AG04450 (cell line): ENCODE measurements at regions of chr18 and their contacts with region 1.

Region 1: GRCh38 chr18:62584241-62585120 is 61.7 kb downstream of the ZCCHC2 start:
- DNase-seq: peak; percentile 78
- H3K4me3 ChIP-seq: no peak overlapping the region
- H3K27ac ChIP-seq: no peak overlapping the region
- H3K27me3 ChIP-seq: peaks cover 2% of the 10 kb centered on the region
- CTCF ChIP-seq: peak; percentile 99

Region 2: DNA sequence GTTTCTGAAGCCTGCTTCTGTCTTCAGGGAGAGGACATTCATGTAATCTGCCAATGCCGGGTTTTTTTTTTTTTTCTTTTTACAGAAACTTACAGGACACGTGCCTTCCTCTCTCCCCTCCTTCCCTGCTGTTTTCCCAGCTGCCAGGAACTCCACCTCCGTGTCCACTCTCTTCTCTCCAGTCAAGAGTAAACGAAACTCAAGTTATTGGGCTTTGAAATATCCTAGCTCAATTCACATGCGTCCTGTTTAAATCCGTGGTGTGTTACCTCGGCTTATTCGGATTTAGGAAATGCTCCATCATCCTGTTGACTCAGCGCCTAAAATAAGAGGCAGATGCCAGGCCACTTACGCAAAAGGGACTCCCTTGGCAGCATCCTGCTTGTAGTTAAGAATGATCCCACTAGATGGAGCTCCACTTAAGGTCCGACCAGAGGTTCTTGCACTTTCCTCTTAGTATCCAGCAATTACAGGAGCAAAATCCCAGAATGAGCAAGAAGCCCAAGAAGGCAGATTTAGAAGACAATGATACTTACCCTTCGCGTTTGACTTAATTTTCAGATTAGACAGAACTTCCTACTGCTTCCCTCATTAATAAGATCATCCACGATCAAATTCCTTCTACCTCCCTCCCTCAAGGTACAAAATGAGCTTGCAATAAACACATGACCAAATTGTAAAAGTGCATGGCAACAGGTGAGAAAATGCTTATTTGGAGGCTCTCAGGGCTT is 158.9 kb before region 1 on chr18:
- CTCF ChIA-PET with region 1: interaction called, 108 read pairs
- POLR2A ChIA-PET with region 1: no interaction called
- DNase-seq: peak; percentile 92
- H3K4me3 ChIP-seq: peak overlapping the region; percentile 55
- H3K27ac ChIP-seq: peak overlapping the region; percentile 77
- H3K27me3 ChIP-seq: peaks cover 11% of the 10 kb centered on the region
- CTCF ChIP-seq: peak; percentile 91

Region 3: GRCh38 chr18:62571648-62572047 is 12.8 kb before region 1 on chr18:
- CTCF ChIA-PET with region 1: interaction called, 62 read pairs
- POLR2A ChIA-PET with region 1: no interaction called
- DNase-seq: no peak
- H3K4me3 ChIP-seq: no peak overlapping the region
- H3K27ac ChIP-seq: no peak overlapping the region
- H3K27me3 ChIP-seq: no peaks in the 10 kb centered on the region
- CTCF ChIP-seq: no peak

Region 4: GRCh38 chr18:62714671-62715435 is 130.4 kb after region 1 on chr18:
- CTCF ChIA-PET with region 1: interaction called, 15 read pairs
- POLR2A ChIA-PET with region 1: no interaction called
- DNase-seq: peak; percentile 100
- H3K4me3 ChIP-seq: peak overlapping the region; percentile 71
- H3K27ac ChIP-seq: peak overlapping the region; percentile 68
- H3K27me3 ChIP-seq: no peaks in the 10 kb centered on the region
- CTCF ChIP-seq: peak; percentile 81

Region 5: DNA sequence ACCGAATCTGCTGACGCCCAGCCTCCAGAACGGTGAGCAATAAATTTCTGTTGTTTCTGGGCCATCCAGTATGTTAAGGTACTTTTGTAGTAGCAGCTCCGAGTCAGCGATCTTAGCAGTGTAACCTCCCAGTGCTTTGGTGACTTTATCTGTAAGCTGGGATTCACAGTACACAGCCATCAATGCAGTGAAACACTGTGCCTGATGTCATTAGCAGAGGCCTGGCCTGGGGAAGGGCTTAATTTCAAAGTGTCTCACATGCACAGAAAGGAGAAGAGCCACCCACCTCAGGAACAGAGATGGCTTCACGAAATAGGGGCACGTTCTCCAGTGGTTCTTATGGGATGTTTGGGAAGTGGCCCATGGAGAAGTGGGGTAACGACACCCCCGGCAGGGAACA is 412.1 kb after region 1 on chr18:
- CTCF ChIA-PET with region 1: interaction called, 11 read pairs
- POLR2A ChIA-PET with region 1: no interaction called
- DNase-seq: no peak
- H3K4me3 ChIP-seq: no peak overlapping the region
- H3K27ac ChIP-seq: no peak overlapping the region
- H3K27me3 ChIP-seq: peaks cover 8% of the 10 kb centered on the region
- CTCF ChIP-seq: no peak

Region 6: GRCh38 chr18:63236921-63237846 is 652.7 kb after region 1 on chr18:
- CTCF ChIA-PET with region 1: no interaction called
- POLR2A ChIA-PET with region 1: no interaction called
- DNase-seq: no peak
- H3K4me3 ChIP-seq: no peak overlapping the region
- H3K27ac ChIP-seq: peak overlapping the region; percentile 31
- H3K27me3 ChIP-seq: peaks cover 5% of the 10 kb centered on the region
- CTCF ChIP-seq: no peak